ENCODE measurements at regions of chr21 and their contacts with region 1.

Region 1: GRCh38 chr21:21341041-21341440 is 342.8 kb downstream of the NCAM2 start:
- DNase-seq: no peak
- ATAC-seq: no peak
- H3K4me3 ChIP-seq: no peak overlapping the region
- H3K27ac ChIP-seq: no peak overlapping the region
- H3K4me1 ChIP-seq: no peaks in the 10 kb centered on the region
- H3K27me3 ChIP-seq: no peaks in the 10 kb centered on the region
- CTCF ChIP-seq: no peak
- POLR2A ChIP-seq: no peak
- RAD21 ChIP-seq: no peak

Region 2: DNA sequence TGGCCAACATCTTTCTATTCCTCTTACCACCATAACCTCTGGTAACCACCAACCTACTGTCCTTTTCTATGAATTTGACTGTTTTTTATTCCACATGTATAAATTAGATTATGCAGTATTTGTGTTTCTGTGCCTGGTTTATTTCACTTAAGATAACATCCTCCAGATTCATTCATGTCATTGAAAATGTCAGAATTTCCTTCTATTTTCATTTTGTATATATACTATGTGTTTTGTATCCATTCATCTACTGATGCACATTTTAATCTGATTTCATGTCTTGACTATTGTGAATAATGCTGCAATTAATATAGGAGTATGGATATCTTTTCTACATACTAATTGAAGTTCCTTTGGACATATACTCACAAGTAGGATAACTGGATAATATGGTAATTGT is 60.4 kb after region 1 on chr21:
- CTCF ChIA-PET with region 1: no interaction called
- POLR2A ChIA-PET with region 1: no interaction called
- dilution Hi-C with region 1: no loop called
- in situ Hi-C with region 1: no loop called
- intact Hi-C with region 1: no loop called
- DNase-seq: no peak
- ATAC-seq: no peak
- H3K4me3 ChIP-seq: no peak overlapping the region
- H3K27ac ChIP-seq: no peak overlapping the region
- H3K4me1 ChIP-seq: no peaks in the 10 kb centered on the region
- H3K27me3 ChIP-seq: no peaks in the 10 kb centered on the region
- CTCF ChIP-seq: no peak
- POLR2A ChIP-seq: no peak
- RAD21 ChIP-seq: no peak

Region 3: DNA sequence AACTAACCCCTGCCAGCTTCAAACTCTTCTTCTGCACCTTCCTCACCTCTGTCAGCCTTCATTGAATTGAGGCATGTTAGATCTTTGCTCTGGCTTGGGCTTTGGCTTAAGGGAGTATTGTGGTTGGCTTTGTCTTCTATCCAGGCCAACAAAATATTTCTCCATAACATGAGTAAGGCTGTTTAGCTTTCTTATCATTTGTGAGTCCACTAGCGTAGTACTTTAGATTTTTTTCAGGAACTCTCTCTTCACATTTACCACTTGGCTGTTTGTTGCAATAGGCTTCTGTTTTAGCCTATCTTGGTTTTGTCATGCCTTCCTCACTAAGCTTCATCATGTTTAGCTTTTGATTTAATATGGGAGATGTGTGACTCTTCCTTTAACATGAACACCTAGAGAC is 74.7 kb after region 1 on chr21:
- CTCF ChIA-PET with region 1: no interaction called
- POLR2A ChIA-PET with region 1: no interaction called
- dilution Hi-C with region 1: no loop called
- in situ Hi-C with region 1: no loop called
- intact Hi-C with region 1: no loop called
- DNase-seq: no peak
- ATAC-seq: no peak
- H3K4me3 ChIP-seq: no peak overlapping the region
- H3K27ac ChIP-seq: no peak overlapping the region
- H3K4me1 ChIP-seq: no peaks in the 10 kb centered on the region
- H3K27me3 ChIP-seq: no peaks in the 10 kb centered on the region
- CTCF ChIP-seq: no peak
- POLR2A ChIP-seq: no peak
- RAD21 ChIP-seq: no peak

Region 4: DNA sequence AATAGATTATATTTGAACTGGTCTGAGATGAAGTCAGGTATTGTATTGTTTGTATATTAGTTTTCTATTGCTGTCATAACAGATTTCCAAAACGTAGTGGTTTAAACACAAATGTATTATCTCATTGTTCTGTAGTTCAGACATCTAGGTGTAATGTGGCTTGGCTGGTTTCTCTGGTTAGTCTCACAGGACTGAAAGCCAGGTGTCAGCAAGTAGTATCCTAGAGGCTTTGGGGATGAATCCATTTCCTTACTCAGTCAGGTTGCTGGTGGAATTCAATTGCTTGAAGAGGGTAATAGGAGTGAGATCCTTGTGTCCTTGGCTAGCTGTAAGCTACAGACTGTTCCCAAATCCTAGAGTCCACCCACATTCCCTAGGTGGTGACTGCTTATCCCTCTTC is 332.9 kb after region 1 on chr21:
- CTCF ChIA-PET with region 1: no interaction called
- POLR2A ChIA-PET with region 1: no interaction called
- dilution Hi-C with region 1: no loop called
- in situ Hi-C with region 1: no loop called
- intact Hi-C with region 1: loop called (anchors 1 kb)
- DNase-seq: no peak
- ATAC-seq: no peak
- H3K4me3 ChIP-seq: no peak overlapping the region
- H3K27ac ChIP-seq: no peak overlapping the region
- H3K4me1 ChIP-seq: no peaks in the 10 kb centered on the region
- H3K27me3 ChIP-seq: no peaks in the 10 kb centered on the region
- CTCF ChIP-seq: no peak
- POLR2A ChIP-seq: no peak
- RAD21 ChIP-seq: no peak

Measured in IMR-90 (cell line).